Psoas muscle (tissue), 8 donors: ENCODE measurements at regions of chr18 and their contacts with region 1.

Region 1: DNA sequence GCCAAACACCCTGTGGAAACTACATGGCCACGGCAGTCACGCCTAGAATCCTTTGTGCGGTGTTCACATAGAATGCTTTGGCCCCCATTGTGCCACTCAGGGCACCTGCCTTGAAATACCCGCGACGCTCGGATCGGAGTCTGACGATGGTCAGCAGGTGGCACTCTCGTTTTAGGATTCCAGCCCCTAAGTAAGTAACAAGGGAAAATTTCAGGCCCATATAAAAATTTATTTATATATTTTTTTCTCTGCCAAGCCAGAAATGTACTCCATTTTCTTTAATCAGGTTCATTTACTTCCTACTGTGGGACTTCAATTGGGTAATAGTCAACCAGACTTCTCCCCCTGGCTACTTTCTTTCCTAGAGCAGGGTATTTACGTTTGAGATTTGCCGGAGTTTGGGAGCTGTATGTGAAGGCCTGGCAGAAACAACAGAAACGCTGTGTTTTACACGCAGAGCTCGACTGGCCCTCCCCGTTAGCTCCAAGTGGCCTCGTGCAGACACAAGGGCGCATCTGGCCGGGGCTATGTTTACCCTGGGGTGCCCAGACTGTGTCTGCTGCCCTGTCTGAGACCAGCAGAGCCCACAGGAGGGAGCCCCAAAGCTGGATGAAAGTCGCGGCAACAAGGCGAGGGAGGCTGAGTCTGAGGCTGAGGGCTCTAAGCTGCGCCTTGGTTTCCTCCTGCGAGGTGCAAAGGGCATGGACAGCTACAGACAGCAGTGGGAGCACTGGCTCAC is 41.6 kb downstream of the LRRC30 start:
- DNase-seq: peak; percentile 57 to 69
- ATAC-seq: peak; percentile 77 to 95 (median 84)
- H3K4me3 ChIP-seq: peak overlapping the region; percentile 26
- H3K27ac ChIP-seq: peak overlapping the region; percentile 56
- H3K4me1 ChIP-seq: peaks cover 9% of the 10 kb centered on the region
- H3K27me3 ChIP-seq: no peaks in the 10 kb centered on the region
- CTCF ChIP-seq: peak; percentile 55

Region 2: GRCh38 chr18:7221424-7222155 is 50.9 kb before region 1 on chr18:
- intact Hi-C with region 1: loop called in 1 of 2 experiments (anchors 5 kb)
- DNase-seq: peak in 1 of 2 donors; percentile 55
- ATAC-seq: peak; percentile 86 to 99 (median 96)
- H3K4me3 ChIP-seq: no peak overlapping the region
- H3K27ac ChIP-seq: no peak overlapping the region
- H3K4me1 ChIP-seq: peaks cover 9% of the 10 kb centered on the region
- H3K27me3 ChIP-seq: no peaks in the 10 kb centered on the region
- CTCF ChIP-seq: peak; percentile 81

Region 3: GRCh38 chr18:7447318-7448028 is 175.0 kb after region 1 on chr18:
- intact Hi-C with region 1: loop called in 1 of 2 experiments (anchors 10 kb)
- DNase-seq: no peak
- ATAC-seq: no peak
- H3K4me3 ChIP-seq: no peak overlapping the region
- H3K27ac ChIP-seq: no peak overlapping the region
- H3K4me1 ChIP-seq: no peaks in the 10 kb centered on the region
- H3K27me3 ChIP-seq: no peaks in the 10 kb centered on the region
- CTCF ChIP-seq: no peak

Region 4: DNA sequence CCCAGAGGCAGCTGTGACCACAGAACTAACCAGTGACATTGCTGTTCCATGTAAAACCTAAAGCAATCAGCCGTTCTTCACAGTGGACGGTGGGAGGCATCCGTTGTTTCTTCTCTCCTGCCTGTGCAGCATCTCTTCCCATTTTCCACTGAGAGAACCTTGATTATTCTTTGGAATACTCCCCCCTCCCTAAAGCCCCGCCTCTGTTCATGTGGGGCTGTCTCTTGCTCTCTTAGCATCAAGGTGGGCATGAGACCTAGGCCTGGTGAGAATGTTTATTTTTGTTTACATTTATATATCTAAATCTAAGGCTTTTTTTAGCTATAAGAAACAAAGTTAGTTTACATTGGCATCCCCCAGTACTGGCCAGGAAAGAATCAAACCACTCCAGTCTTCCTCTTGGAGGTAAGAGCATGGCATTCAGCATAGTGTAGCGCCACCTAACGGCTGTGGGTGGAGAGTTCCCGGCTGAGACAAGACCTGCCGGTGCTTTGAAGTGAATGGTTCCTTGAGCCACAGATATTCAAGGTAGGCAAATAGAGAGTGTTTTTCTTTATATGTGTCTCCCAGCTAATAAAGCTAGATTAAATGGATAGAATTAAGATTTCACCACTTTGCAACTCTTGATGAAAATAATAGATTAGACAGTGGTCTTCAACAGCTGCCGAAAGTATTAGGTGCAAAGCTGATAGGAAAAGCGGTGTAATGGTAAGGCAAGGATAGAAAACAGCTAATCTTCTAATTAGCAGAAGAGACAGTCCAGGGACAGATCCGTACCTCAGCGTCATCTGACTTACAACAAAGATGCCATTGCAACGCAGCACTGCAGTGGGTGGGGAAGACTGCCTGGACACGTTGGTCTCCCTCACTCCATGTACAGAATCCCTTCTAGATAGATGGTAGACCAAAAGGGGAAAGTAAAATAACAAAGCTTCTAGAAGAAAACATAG is 1117.2 kb after region 1 on chr18:
- intact Hi-C with region 1: loop called (anchors 5 to 10 kb)
- DNase-seq: peak; percentile 59 to 76
- ATAC-seq: peak; percentile 75 to 88 (median 86)
- H3K4me3 ChIP-seq: no peak overlapping the region
- H3K27ac ChIP-seq: no peak overlapping the region
- H3K4me1 ChIP-seq: no peaks in the 10 kb centered on the region
- H3K27me3 ChIP-seq: no peaks in the 10 kb centered on the region
- CTCF ChIP-seq: peak; percentile 77